RWPE1 (cell line): ENCODE measurements at regions of chr11 and their contacts with region 1.

Region 1: DNA sequence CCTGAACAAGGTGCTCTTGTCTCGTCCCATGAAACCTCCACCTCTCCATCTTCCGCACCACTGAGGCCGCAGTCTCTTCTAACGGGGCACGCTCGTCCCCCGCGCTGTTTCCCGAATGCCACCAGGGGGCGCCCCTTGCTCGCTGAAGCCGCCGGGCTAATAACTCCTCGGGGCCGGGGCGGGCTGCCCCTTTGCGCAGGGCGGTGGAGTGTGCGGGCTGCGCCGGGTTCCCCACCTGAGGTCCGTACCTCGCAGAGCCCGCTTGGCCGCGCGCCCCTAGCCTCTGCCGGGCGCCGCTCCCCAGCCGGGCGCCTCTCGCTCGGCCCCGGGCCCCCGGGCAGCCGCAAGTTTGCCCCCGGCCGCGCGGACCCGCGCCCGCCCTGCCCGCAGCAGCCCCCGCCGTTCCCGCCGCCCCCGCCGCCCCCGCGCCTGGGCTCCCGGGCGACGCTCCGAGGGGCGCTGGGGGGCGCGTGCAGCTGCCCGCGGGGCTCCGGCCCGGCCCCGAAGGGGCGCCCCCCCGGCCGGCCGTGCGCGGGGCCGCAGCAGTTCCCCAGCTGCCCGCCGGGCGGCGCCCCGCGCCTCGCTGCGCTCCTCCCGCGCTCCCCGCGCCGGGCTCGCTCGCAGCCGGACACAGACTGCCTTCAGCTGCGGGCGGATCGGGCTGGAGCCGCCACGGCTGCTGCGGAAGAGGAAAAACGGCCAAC is at the start of gene GRIK4:
- DNase-seq: peak; percentile 88
- H3K27ac ChIP-seq: no peak within 1 kb of the TSS
- CTCF ChIP-seq: peak; percentile 87

Region 2: GRCh38 chr11:120547811-120548681 is 36.8 kb after region 1 on chr11:
- CTCF ChIA-PET with region 1: interaction called, 12 read pairs
- POLR2A ChIA-PET with region 1: no interaction called
- DNase-seq: peak; percentile 75
- H3K27ac ChIP-seq: peak overlapping the region; percentile 67
- CTCF ChIP-seq: no peak

Region 3: DNA sequence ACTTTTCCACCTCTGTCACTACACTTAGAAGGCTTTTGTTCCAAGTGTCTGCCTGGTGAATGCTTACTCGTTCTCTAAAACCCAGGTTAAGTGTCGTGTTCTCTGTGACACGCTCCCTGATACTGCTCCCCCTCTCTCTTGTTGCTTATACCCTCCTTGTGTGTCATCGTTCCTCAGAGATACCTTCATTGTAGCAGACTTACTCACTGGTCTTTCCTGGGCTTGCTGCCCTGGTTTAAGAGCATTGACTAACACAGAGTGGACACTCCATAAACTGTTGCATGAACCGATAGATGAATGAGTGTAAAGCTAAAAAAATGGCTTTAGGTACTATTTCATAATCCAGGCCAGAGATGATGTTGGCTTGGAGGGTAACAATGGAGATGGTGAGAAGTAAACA is 171.6 kb after region 1 on chr11:
- CTCF ChIA-PET with region 1: interaction called, 61 read pairs
- POLR2A ChIA-PET with region 1: no interaction called
- DNase-seq: no peak
- H3K27ac ChIP-seq: no peak overlapping the region
- CTCF ChIP-seq: no peak

Region 4: DNA sequence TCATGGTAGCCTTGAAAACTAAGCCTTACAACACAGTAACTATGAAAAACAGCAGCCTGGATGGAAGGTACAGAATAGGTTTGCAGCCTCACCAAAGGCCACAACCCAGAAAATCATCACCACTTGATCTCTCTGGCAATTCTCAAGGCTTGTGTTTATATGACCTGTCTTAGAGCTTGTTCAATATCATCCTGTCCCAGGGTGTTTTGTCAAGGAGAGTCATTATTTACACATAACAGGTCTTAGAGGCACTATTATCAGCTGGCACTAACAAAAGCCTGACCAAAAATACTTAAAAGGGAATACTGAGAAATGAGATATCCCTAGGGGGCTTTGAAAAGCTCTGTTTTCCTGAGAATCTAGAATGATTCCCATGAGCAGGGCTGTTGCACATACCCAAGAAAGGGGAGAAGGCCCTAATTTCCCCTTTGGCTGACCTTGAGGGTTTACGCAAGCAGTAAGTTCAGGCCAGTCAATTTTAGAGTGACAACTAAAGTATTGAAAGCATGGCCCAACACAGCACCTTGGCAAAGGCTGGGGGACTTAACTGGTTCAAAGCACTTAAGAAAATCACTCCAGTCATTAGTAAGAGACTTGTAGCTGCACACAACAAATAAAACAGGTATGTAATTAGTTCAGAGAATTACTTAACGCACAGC is 789.2 kb after region 1 on chr11:
- CTCF ChIA-PET with region 1: no interaction called
- POLR2A ChIA-PET with region 1: no interaction called
- DNase-seq: no peak
- H3K27ac ChIP-seq: no peak overlapping the region
- CTCF ChIP-seq: no peak